ENCODE measurements at regions of chr10 and their contacts with region 1.

Region 1: GRCh38 chr10:102776779-102777456 is 33.2 kb downstream of the WBP1L start:
- DNase-seq: peak; percentile 87 to 89
- ATAC-seq: peak; percentile 68
- H3K4me3 ChIP-seq: peak overlapping the region; percentile 14 to 38
- H3K27ac ChIP-seq: peak overlapping the region; percentile 97 to 100
- H3K4me1 ChIP-seq: peaks cover 6 to 7% of the 10 kb centered on the region in 2 donors
- H3K27me3 ChIP-seq: no peaks in the 10 kb centered on the region

Region 2: GRCh38 chr10:102743588-102744373 is 33.1 kb before region 1 on chr10 and contains the start of gene WBP1L:
- intact Hi-C with region 1: loop called (anchors 5 kb)
- DNase-seq: peak; percentile 97
- ATAC-seq: peak; percentile 97
- H3K4me3 ChIP-seq: peak within 1 kb of the TSS; percentile 57 to 79
- H3K27ac ChIP-seq: peak within 1 kb of the TSS; percentile 37 to 96
- H3K4me1 ChIP-seq: peaks cover 0 to 3% of the 10 kb centered on the region in 2 donors
- H3K27me3 ChIP-seq: no peaks in the 10 kb centered on the region
- total RNA-seq, gene WBP1L: 81.1 to 84.7 TPM

Region 3: DNA sequence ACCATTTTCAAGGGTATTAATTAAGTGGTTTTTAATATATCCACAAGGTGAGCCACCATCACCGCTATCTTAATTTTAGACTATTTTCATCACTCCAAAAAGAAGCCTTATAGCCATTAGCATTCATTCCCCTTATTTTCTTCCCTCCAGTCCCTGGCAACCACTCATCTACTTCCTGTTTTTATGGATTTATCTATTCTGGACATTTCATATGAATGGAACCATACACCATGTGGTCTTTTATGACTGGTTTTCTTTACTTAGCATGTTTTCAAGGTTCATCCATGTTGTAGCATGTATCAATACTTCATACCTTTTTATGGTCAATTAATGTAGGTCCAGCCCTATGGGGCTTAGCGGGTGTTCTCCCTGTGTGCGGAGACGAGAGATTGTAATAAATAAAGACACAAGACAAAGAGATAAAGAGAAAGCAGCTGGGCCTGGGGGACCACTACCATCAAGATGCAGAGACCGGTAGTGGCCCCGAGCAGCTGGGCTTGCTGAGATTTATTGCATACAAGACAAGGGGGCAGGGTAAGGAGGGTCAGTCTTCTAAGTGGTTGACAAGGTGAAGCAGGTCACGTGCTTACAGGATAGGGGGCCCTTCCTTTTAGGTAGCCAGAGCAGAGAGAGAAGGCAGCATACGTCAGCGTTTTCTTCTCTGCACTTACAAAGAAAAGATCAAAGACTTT is 18.5 kb before region 1 on chr10:
- intact Hi-C with region 1: loop called in 1 of 2 experiments (anchors 2 kb)
- DNase-seq: no peak
- ATAC-seq: no peak
- H3K4me3 ChIP-seq: no peak overlapping the region
- H3K27ac ChIP-seq: no peak overlapping the region
- H3K4me1 ChIP-seq: peaks cover 1 to 4% of the 10 kb centered on the region in 2 donors
- H3K27me3 ChIP-seq: no peaks in the 10 kb centered on the region